ENCODE measurements at regions of chr10 and their contacts with region 1.

Region 1: DNA sequence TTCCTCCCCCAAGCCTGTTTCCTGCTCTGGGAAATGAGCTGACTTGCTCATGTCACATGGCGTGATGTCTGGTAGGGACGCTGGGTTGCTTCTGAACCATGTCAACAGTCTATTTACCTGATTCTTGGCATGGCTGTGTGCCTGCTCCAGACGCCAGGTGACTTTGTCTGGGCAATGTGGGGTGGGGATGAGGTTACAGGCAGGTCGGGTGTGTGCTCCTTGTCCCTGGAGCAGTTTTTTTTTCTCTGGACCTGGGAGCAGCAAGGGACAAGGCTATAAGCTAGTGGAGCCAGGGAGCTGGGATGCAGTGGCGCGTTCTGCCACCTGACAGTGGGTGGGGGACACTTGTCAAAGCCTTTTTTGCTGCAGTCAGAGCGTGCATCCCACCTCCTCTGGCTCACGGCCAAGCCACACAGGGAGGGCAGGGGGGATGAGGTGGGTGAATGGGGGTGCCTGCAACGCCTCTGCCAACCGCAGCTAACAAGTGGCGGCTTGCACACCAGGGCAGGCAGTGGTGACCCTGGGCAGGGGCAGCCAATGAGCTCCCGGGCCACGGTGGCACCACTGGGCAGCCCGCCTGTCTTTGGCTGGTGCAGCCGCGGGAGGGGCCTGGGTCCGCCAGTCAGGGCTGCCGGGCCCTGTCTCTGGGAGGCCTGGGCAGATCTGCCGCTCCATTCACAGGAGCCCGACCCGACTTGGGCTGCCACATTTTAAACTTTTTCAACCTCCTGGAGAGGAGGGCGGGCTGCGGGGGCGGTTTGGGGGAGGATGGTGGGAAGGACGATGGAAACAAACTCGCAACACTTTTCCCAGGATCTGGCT is 22.9 kb downstream of the DNAJB12 start:
- DNase-seq: peak; percentile 96
- ATAC-seq: peak; percentile 80
- H3K4me3 ChIP-seq: 0 out of 2 replicates have a peak overlapping the region, but pooled peaks have one; percentile 4
- H3K27ac ChIP-seq: peak overlapping the region; percentile 95
- H3K4me1 ChIP-seq: peaks cover 76% of the 10 kb centered on the region
- H3K27me3 ChIP-seq: no peaks in the 10 kb centered on the region
- CTCF ChIP-seq: peak; percentile 1 to 50 (median 13); a peak in 1 of 6 replicates
- EP300 ChIP-seq: peak; percentile 31 to 85; a peak in 3 of 4 replicates
- POLR2A ChIP-seq: peak; percentile 68
- RAD21 ChIP-seq: no peak

Region 2: GRCh38 chr10:72229261-72230251 is 102.3 kb before region 1 on chr10:
- CTCF ChIA-PET with region 1: interaction called, 32 read pairs
- POLR2A ChIA-PET with region 1: no interaction called
- RAD21 ChIA-PET with region 1: interaction called, 11 read pairs
- SMC1A ChIA-PET with region 1: interaction called, 3 read pairs
- in situ Hi-C with region 1: loop called (anchors 5 kb)
- intact Hi-C with region 1: no loop called
- DNase-seq: no peak
- ATAC-seq: no peak
- H3K4me3 ChIP-seq: no peak overlapping the region
- H3K27ac ChIP-seq: no peak overlapping the region
- H3K4me1 ChIP-seq: peaks cover 3% of the 10 kb centered on the region
- H3K27me3 ChIP-seq: no peaks in the 10 kb centered on the region
- CTCF ChIP-seq: no peak
- EP300 ChIP-seq: no peak
- POLR2A ChIP-seq: no peak
- RAD21 ChIP-seq: no peak

Region 3: DNA sequence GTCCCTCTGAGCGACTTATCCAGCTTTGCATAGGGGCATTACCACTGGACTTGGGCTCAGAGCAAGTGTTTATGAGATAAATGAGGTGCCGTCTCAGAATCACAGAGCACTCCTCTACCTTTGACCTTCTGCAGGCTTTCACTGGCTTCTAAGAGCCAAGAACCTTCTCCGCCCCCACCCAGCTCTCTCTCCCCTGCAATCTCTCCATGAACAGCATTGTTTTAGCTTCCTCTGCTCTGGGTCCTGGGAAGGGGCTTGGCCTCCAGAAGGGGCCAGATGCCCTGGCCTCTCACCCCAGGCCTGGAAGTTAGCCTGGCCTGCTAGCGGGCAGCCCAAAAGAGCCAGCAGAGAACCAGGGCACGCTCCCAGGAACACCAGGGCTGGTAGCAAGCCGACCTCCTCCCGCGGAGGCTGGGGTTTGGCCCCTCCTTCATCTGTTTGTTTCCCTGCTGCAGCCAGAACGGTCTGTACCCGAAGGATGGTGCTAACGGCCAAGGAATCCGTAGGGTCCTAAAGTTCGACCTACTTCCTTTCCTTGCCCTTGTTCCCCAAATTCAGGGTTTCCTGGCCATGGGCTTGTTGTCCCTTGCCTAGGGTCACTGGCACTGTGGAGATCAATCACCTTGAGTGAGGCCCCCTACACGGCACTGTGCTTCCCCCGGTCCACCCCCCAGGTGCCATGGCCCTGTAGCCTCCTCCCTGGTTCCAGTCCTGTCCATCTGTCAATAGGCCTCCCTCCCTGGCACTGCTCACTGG is 76.8 kb before region 1 on chr10:
- CTCF ChIA-PET with region 1: interaction called, 57 read pairs
- POLR2A ChIA-PET with region 1: interaction called, 48 read pairs
- RAD21 ChIA-PET with region 1: interaction called, 170 read pairs
- SMC1A ChIA-PET with region 1: interaction called, 56 read pairs
- in situ Hi-C with region 1: no loop called
- intact Hi-C with region 1: no loop called
- DNase-seq: no peak
- ATAC-seq: peak; percentile 73
- H3K4me3 ChIP-seq: peak overlapping the region; percentile 10; the same call in 1 of the 2 replicates
- H3K27ac ChIP-seq: peak overlapping the region; percentile 90
- H3K4me1 ChIP-seq: peaks cover 72% of the 10 kb centered on the region
- H3K27me3 ChIP-seq: no peaks in the 10 kb centered on the region
- CTCF ChIP-seq: peak in 1 of 3 experiments; percentile 33; a peak in 2 of 6 replicates
- EP300 ChIP-seq: no peak
- POLR2A ChIP-seq: peak; percentile 69
- RAD21 ChIP-seq: peak; percentile 40

Region 4: DNA sequence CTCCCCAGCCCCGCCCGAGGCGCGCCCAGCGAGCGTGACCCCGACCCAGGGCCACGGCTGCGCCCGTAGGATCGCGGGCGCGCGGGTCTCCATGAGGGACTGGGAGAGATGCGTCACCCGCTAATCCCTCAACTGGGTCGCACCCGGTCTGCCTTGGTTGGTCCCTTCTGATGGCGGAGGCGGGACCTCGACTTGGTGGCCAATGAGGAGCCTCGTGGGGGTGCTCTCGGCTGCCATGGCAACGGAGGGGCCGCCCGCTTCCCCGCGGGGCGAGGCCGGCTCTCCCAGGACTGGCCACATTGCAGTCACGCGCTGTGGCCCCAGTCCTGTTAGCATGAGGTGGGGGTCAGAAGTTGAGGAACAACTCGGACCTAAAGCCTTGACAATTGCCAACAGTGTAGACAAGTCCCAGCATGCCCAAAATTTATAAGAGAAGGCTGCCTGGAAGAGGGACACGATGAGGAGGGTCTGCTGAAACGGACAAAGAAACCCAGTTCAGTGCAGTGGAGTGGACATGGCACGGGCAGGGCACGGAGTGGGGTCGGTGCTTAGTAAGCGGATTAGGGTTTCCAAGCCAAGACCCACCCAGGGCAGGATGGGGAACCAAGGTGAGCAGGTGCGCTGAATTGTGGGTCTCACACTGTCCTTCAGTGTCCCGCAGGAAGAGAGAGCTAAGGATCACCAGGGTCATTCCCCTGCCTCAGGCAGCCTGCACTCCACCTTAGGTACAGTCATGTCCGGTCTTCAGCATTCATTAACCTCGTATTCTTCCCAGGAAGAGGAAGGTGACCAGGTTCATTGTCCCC is 33.6 kb before region 1 on chr10:
- CTCF ChIA-PET with region 1: interaction called, 19 read pairs
- POLR2A ChIA-PET with region 1: interaction called, 93 read pairs
- RAD21 ChIA-PET with region 1: interaction called, 67 read pairs
- SMC1A ChIA-PET with region 1: interaction called, 17 read pairs
- in situ Hi-C with region 1: no loop called
- intact Hi-C with region 1: loop called (anchors 1 kb)
- DNase-seq: peak; percentile 91
- ATAC-seq: peak; percentile 84
- H3K4me3 ChIP-seq: peak overlapping the region; percentile 80
- H3K27ac ChIP-seq: peak overlapping the region; percentile 100
- H3K4me1 ChIP-seq: peaks cover 40% of the 10 kb centered on the region
- H3K27me3 ChIP-seq: no peaks in the 10 kb centered on the region
- CTCF ChIP-seq: no peak
- EP300 ChIP-seq: peak in 1 of 2 experiments; percentile 24; a peak in 1 of 4 replicates
- POLR2A ChIP-seq: peak; percentile 83
- RAD21 ChIP-seq: no peak